Activated naive CD4-positive, alpha-beta T cell treated with anti-CD3 and anti-CD28 coated beads, Interleukin-2, amount 10 ng/mL, durations not matched to agents 7 days and 5 days (primary cell): ENCODE measurements at regions of chr12 and their contacts with region 1.

Region 1: GRCh38 chr12:38327356-38327755 is 10.8 kb downstream of the ALG10B start:
- DNase-seq: no peak
- H3K4me3 Mint-ChIP-seq: no peak overlapping the region
- H3K27ac Mint-ChIP-seq: no peak overlapping the region
- H3K4me1 Mint-ChIP-seq: no peaks in the 10 kb centered on the region
- H3K27me3 Mint-ChIP-seq: no peaks in the 10 kb centered on the region

Region 2: GRCh38 chr12:38456537-38457159 is 129.3 kb after region 1 on chr12:
- CTCF ChIA-PET with region 1: no interaction called
- DNase-seq: no peak
- H3K4me3 Mint-ChIP-seq: no peak overlapping the region
- H3K27ac Mint-ChIP-seq: no peak overlapping the region
- H3K4me1 Mint-ChIP-seq: no peaks in the 10 kb centered on the region
- H3K27me3 Mint-ChIP-seq: no peaks in the 10 kb centered on the region

Region 3: DNA sequence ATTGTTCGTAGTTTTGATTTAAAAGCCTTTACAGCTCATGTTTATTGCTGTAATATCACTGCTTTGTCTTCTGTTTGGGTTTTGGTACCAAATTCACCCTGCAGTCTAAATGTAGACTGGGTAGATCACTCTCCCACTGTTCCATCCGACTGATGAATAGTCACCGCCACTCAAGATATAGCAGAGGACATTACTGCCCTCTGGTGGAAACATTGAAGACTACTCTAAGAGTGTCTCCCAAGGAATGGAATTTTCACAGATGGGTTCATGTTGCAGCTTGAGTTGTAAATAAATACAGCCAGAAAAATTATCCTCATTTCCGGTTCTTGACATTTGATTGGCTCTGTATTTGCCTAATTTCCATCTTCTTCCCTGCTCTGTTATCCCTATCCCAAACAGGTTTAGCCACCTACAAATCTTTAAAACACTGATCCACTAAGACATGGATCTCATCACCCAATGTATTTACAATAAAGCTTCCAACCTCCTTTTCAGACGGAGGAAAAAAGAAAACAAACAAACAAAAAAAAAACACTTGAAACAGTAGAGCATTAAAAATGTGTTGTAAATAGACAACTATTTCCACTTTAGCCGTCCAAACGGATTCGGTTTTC is 776.3 kb after region 1 on chr12:
- CTCF ChIA-PET with region 1: interaction called, 18 read pairs
- DNase-seq: no peak
- H3K4me3 Mint-ChIP-seq: no peak overlapping the region
- H3K27ac Mint-ChIP-seq: no peak overlapping the region
- H3K4me1 Mint-ChIP-seq: no peaks in the 10 kb centered on the region
- H3K27me3 Mint-ChIP-seq: no peaks in the 10 kb centered on the region